ENCODE measurements at regions of chr1 and their contacts with region 1.

Region 1: GRCh38 chr1:41573785-41574713 is 89.6 kb upstream of the EDN2 start:
- DNase-seq: peak; percentile 86
- H3K4me3 ChIP-seq: peak overlapping the region in 1 of 2 experiments; percentile 43; a peak in 1 of 4 replicates
- H3K27ac ChIP-seq: no peak overlapping the region; a peak in 1 of 4 replicates
- H3K4me1 ChIP-seq: peaks cover 4 to 18% of the 10 kb centered on the region in 2 experiments; a peak in 3 of 4 replicates
- H3K27me3 ChIP-seq: no peaks in the 10 kb centered on the region
- CTCF ChIP-seq: peak; percentile 96
- EP300 ChIP-seq: no peak
- RAD21 ChIP-seq: peak; percentile 100

Region 2: DNA sequence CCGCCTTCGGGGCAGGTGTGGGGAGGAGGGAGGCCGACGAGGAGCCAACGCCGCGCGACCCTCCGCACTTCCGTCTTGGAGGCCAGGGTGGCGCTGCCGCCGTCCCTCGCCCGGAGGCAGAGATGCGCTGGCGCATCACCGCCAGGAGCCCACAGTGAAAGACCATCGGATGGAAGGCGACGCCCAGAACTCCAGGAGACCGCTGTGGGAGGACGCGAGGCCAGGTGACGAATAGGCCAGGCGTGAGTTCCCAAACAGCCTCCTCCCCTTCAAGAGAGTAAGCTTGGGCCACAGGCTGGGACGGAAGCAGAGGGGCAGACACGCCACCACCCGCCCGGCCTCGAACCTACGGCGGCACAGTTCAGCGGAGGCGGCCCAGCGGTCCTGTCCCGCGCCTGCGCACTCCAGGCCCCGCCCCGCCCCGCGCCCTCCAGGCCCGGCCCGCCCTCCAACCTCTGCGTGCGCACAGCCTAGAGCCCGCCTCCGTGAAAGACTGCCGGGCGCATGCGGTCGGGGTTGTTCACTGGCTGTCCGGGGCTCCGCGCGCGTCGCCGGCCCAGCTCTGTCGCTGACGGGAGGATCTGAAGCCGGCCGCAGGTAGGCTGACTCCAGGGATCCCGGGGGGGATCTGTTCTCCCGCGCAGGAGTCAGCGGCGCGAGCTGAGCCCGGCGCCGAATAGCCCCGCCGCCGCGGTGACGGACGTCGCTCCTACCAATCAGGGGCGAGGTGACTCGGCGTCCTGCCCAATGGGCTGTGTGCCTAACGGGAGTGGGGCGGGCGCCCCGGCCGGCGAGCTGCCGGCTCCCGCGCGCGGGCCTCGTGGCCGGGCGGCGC is 594.6 kb before region 1 on chr1 and contains the start of gene CTPS1:
- CTCF ChIA-PET with region 1: no interaction called
- POLR2A ChIA-PET with region 1: no interaction called
- DNase-seq: peak; percentile 99
- H3K4me3 ChIP-seq: peak within 1 kb of the TSS; percentile 73 to 74
- H3K27ac ChIP-seq: peak within 1 kb of the TSS; percentile 87 to 94
- H3K4me1 ChIP-seq: peaks cover 23 to 33% of the 10 kb centered on the region in 2 experiments
- H3K27me3 ChIP-seq: no peaks in the 10 kb centered on the region
- CTCF ChIP-seq: peak; percentile 44
- EP300 ChIP-seq: no peak
- RAD21 ChIP-seq: no peak
- polyA plus RNA-seq, gene CTPS1: 34.4 and 34.5 TPM in 2 replicates

Region 3: GRCh38 chr1:41537788-41538351 is 36.2 kb before region 1 on chr1:
- CTCF ChIA-PET with region 1: interaction called, 14 read pairs
- POLR2A ChIA-PET with region 1: no interaction called
- DNase-seq: no peak
- H3K4me3 ChIP-seq: no peak overlapping the region
- H3K27ac ChIP-seq: peak overlapping the region in 1 of 2 experiments; percentile 25; a peak in 1 of 4 replicates
- H3K4me1 ChIP-seq: peaks cover 5 to 23% of the 10 kb centered on the region in 2 experiments; a peak in 2 of 4 replicates
- H3K27me3 ChIP-seq: no peaks in the 10 kb centered on the region
- CTCF ChIP-seq: no peak
- EP300 ChIP-seq: no peak
- RAD21 ChIP-seq: no peak

Region 4: DNA sequence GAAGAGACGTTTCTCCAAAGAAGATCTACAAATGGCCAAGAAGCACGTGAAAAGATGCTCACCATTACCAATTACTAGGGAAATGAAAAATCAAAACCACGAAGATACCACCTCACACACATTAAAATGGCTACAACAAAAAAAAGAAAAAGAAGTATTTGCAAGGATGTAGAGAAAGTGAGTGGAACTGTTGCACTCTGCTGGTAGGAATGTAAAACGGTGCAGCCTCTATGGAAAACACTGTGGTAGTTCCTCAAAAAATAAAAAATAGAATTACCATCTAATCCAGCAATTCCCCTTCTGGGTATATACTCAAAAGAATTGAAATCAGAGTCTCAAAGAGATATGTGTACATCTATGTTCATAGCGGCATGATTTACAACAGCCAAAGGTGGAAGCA is 25.9 kb after region 1 on chr1:
- CTCF ChIA-PET with region 1: interaction called, 19 read pairs
- POLR2A ChIA-PET with region 1: no interaction called
- DNase-seq: no peak
- H3K4me3 ChIP-seq: no peak overlapping the region
- H3K27ac ChIP-seq: no peak overlapping the region
- H3K4me1 ChIP-seq: no peaks in the 10 kb centered on the region
- H3K27me3 ChIP-seq: no peaks in the 10 kb centered on the region
- CTCF ChIP-seq: peak; percentile 64
- EP300 ChIP-seq: no peak
- RAD21 ChIP-seq: peak; percentile 12; the same call in 1 of the 2 replicates

Region 5: DNA sequence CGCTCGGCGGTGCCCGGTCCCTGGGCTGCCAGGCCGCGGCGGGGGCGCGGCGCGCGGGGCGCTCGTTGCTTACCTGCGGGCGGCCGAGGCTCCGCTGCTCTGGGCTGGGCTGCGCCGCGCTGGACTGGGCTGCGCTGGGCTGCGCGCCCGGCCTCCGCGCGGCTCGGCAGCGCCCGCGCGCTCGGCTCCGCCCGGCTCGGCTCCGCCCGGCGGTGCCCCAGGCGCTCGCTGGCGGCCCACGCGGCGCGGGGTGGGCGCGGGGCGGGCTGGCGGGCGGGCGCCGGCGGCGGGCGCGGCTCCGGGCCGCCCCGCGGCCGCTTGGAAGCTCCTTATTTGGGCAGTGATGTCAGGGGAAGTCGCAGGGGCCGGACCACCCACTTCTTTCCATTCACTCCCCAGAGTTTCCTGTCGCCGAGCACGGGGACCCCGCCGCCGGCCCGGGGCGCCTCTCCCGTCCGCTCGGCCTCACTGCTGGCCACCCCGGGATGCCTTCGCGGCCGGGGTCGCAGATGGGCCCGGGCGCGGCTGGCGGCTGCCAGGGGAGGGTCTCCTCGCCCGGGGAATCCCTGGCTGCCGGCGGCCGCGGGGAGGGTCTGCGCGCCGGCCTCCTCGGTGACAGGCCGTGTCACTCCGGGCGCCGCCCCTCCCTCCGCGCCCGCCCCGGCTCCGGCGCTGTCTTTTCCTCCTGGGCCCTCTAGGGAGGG is 88.2 kb after region 1 on chr1:
- CTCF ChIA-PET with region 1: interaction called, 18 read pairs
- POLR2A ChIA-PET with region 1: no interaction called
- DNase-seq: peak; percentile 89
- H3K4me3 ChIP-seq: peak overlapping the region; percentile 56 to 62
- H3K27ac ChIP-seq: 0 out of 4 replicates have a peak overlapping the region, but pooled peaks of 1 of the 2 experiments have one; percentile 7
- H3K4me1 ChIP-seq: peaks cover 8 to 21% of the 10 kb centered on the region in 2 experiments; a peak in 3 of 4 replicates
- H3K27me3 ChIP-seq: no peaks in the 10 kb centered on the region
- CTCF ChIP-seq: no peak
- EP300 ChIP-seq: no peak
- RAD21 ChIP-seq: no peak

Region 6: DNA sequence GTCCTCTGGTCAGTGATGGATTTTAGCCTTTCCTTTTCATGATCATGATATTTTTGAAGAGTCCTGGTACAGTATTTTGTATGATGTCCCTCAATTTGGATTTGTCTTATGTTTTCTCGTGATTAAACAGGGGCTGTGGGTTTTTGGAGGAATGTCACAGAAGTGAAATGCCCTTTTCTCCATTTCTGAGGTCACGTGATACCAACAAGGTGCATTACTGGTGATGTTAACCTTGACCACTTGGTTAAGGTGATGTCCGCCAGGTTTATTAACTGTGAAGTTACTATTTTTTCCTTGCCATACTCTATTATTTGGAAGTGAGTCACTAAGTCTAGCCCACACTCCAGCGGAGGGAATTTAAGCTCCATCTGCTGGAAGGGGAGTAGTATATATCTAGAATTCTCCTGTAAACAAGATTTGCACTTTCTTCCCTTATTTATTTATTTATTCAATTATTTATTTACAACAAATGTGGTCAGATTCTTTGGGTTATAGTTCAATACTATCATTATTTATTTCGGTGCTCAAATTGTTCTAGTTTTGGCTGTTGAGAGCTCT is 221.2 kb after region 1 on chr1:
- CTCF ChIA-PET with region 1: interaction called, 16 read pairs
- POLR2A ChIA-PET with region 1: no interaction called
- DNase-seq: no peak
- H3K4me3 ChIP-seq: no peak overlapping the region
- H3K27ac ChIP-seq: no peak overlapping the region
- H3K4me1 ChIP-seq: no peaks in the 10 kb centered on the region; a peak in 1 of 4 replicates
- H3K27me3 ChIP-seq: no peaks in the 10 kb centered on the region
- CTCF ChIP-seq: peak; percentile 47
- EP300 ChIP-seq: no peak
- RAD21 ChIP-seq: peak; percentile 65

Region 7: GRCh38 chr1:42173155-42173933 is 599.3 kb after region 1 on chr1:
- CTCF ChIA-PET with region 1: interaction called, 31 read pairs
- POLR2A ChIA-PET with region 1: no interaction called
- DNase-seq: peak; percentile 74
- H3K4me3 ChIP-seq: peak overlapping the region in 1 of 2 experiments; percentile 10; a peak in 1 of 4 replicates
- H3K27ac ChIP-seq: peak overlapping the region in 1 of 2 experiments; percentile 19; a peak in 2 of 4 replicates
- H3K4me1 ChIP-seq: peaks cover 14 to 46% of the 10 kb centered on the region in 2 experiments; a peak in 3 of 4 replicates
- H3K27me3 ChIP-seq: no peaks in the 10 kb centered on the region
- CTCF ChIP-seq: peak; percentile 96
- EP300 ChIP-seq: no peak
- RAD21 ChIP-seq: peak; percentile 64